Dendritic cell treated with granulocyte-macrophage colony-stimulating factor and Interleukin-4, amounts not matched to agents 40 ng/mL and 50 ng/mL, for 4 days (primary cell): ENCODE measurements at regions of chr3 and their contacts with region 1.

Region 1: DNA sequence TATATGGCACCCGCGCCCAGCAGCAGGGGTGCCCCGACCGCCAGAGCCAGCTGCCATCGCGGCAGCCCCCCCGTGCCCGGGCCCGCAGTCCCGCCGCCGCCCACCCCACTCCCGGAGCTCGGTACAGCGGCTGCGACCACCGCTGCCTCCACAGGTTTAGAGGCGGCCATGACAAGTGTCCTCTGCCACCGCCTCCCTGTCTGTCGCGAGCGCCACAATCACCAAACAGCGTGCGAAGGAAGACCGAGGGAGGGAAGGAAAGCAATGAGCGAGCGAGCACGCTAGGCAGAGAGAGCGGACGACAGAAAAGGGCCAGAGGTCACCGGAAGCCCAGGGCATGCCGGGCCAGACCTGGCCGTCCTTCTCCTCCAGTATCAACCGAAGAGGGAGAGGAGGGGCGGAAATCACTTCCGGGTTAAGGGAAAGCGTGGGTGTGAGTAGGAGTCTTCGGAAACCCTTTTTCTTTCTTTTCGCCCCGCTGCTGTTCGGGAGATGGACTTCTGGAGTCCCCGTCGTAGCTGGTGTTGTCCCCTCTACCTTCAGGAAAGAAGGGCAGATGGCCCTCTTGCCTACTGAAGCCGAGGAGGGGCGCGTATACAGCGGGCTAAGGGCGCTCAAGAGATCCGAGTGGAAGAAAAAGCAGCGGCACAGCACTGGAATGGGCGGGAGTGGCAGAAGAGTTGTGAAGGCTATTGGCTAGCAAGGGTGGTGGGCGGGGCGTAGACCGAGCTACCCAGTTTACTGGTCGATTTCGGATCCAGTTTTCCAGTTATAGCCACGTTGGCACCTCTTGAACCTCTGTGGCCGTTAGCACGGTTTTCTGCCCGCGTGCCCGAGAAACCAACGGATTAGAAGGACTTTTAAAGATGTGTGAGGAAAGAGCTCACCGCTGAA is at the starts of genes LNP1 and TOMM70:
- H3K4me3 Mint-ChIP-seq: peak within 1 kb of the TSS; percentile 96
- H3K27ac Mint-ChIP-seq: peak within 1 kb of the TSS; percentile 98
- H3K4me1 Mint-ChIP-seq: peaks cover 37% of the 10 kb centered on the region
- H3K27me3 Mint-ChIP-seq: no peaks in the 10 kb centered on the region

Region 2: DNA sequence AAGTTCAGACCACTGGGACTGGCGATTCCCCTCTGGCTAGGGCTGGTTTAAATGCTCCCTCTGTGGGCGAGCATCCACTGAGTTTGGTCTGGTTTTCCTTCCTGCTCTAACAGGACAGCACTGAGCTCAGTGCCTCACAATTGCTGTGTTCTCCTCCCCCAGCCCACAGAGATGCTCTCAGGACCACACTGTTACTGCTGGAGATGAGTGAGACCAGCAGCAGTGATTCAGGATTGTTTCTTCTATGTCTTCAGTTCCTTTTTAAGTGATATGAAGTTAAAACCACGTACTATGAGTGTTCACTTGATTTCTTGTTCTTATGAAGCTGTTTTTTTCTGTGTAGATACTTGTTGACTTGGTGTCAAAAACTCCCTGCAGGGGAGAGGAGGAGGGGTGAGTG is 943.0 kb before region 1 on chr3:
- intact Hi-C with region 1: no loop called
- H3K4me3 Mint-ChIP-seq: no peak overlapping the region
- H3K27ac Mint-ChIP-seq: no peak overlapping the region
- H3K4me1 Mint-ChIP-seq: no peaks in the 10 kb centered on the region
- H3K27me3 Mint-ChIP-seq: no peaks in the 10 kb centered on the region

Region 3: GRCh38 chr3:99817437-99818240 is 583.4 kb before region 1 on chr3 and contains the start of gene CMSS1:
- intact Hi-C with region 1: loop called (anchors 5 kb)
- H3K4me3 Mint-ChIP-seq: peak within 1 kb of the TSS; percentile 92
- H3K27ac Mint-ChIP-seq: peak within 1 kb of the TSS; percentile 96
- H3K4me1 Mint-ChIP-seq: peaks cover 10% of the 10 kb centered on the region
- H3K27me3 Mint-ChIP-seq: no peaks in the 10 kb centered on the region

Region 4: GRCh38 chr3:100260685-100261484 is 140.1 kb before region 1 on chr3 and contains the start of gene TBC1D23:
- intact Hi-C with region 1: loop called (anchors 1 kb)
- H3K4me3 Mint-ChIP-seq: peak within 1 kb of the TSS; percentile 97
- H3K27ac Mint-ChIP-seq: peak within 1 kb of the TSS; percentile 92
- H3K4me1 Mint-ChIP-seq: peaks cover 43% of the 10 kb centered on the region
- H3K27me3 Mint-ChIP-seq: no peaks in the 10 kb centered on the region

Region 5: GRCh38 chr3:100334488-100335351 is 66.3 kb before region 1 on chr3 and contains the start of gene NIT2:
- intact Hi-C with region 1: loop called (anchors 2 kb)
- H3K4me3 Mint-ChIP-seq: peak within 1 kb of the TSS; percentile 87
- H3K27ac Mint-ChIP-seq: peak within 1 kb of the TSS; percentile 88
- H3K4me1 Mint-ChIP-seq: peaks cover 25% of the 10 kb centered on the region
- H3K27me3 Mint-ChIP-seq: no peaks in the 10 kb centered on the region

Region 6: DNA sequence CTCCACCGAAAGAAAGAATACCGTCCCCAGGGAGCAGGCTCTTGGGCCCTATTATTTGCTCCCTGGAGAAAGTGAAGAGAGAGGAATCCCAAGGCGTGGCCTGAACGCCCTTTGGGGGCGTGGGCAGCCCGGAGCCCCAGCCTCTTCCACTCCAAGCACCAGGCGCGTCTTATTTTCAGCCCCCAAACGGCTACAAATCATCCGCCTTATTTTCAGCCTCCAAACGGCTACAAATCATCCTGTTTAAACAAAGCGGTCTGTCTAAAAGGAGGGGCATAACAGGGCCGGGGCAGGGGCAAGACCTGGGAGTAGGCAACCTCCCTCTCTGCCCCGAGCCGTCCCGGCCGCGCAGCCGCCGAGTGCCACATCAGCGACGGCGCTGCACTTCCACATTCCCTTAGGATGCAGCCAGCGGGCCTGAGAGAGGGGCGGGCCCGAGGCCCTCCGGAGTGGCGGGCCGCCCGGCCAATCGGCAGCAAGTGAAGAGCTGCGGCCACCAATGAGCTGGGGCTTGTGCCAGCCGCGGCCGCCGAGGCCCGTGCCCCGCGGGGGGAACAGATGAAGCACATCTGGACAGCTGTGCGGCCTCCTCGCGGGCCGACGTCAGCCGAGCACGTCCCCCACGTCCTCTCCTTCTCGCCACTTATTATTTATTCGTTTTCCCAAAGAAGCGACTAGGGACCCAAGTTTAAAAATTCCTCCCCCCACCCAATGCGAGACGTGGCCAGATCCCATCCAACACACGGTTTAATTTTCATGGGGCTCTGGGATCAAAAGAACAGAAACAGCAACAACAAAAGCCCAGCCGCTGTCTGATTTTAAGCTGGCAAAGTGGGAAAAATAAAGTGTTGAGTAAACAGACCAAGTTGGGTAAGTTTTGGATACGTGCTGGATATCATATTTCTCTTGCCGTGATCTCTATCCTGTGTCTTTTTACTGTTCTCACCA is 91.3 kb after region 1 on chr3 and contains the start of gene TMEM45A:
- intact Hi-C with region 1: loop called (anchors 1 kb)
- H3K4me3 Mint-ChIP-seq: peak within 1 kb of the TSS; percentile 76
- H3K27ac Mint-ChIP-seq: peak within 1 kb of the TSS; percentile 61
- H3K4me1 Mint-ChIP-seq: peaks cover 8% of the 10 kb centered on the region
- H3K27me3 Mint-ChIP-seq: peaks cover 20% of the 10 kb centered on the region

Region 7: GRCh38 chr3:100548053-100548452 is 147.0 kb after region 1 on chr3:
- intact Hi-C with region 1: no loop called
- H3K4me3 Mint-ChIP-seq: no peak overlapping the region
- H3K27ac Mint-ChIP-seq: no peak overlapping the region
- H3K4me1 Mint-ChIP-seq: no peaks in the 10 kb centered on the region
- H3K27me3 Mint-ChIP-seq: no peaks in the 10 kb centered on the region

Region 8: GRCh38 chr3:101512646-101513418 is 1111.8 kb after region 1 on chr3 and contains the start of gene SENP7:
- intact Hi-C with region 1: loop called (anchors 5 kb)
- H3K4me3 Mint-ChIP-seq: peak within 1 kb of the TSS; percentile 95
- H3K27ac Mint-ChIP-seq: peak within 1 kb of the TSS; percentile 91
- H3K4me1 Mint-ChIP-seq: peaks cover 19% of the 10 kb centered on the region
- H3K27me3 Mint-ChIP-seq: no peaks in the 10 kb centered on the region

Region 9: DNA sequence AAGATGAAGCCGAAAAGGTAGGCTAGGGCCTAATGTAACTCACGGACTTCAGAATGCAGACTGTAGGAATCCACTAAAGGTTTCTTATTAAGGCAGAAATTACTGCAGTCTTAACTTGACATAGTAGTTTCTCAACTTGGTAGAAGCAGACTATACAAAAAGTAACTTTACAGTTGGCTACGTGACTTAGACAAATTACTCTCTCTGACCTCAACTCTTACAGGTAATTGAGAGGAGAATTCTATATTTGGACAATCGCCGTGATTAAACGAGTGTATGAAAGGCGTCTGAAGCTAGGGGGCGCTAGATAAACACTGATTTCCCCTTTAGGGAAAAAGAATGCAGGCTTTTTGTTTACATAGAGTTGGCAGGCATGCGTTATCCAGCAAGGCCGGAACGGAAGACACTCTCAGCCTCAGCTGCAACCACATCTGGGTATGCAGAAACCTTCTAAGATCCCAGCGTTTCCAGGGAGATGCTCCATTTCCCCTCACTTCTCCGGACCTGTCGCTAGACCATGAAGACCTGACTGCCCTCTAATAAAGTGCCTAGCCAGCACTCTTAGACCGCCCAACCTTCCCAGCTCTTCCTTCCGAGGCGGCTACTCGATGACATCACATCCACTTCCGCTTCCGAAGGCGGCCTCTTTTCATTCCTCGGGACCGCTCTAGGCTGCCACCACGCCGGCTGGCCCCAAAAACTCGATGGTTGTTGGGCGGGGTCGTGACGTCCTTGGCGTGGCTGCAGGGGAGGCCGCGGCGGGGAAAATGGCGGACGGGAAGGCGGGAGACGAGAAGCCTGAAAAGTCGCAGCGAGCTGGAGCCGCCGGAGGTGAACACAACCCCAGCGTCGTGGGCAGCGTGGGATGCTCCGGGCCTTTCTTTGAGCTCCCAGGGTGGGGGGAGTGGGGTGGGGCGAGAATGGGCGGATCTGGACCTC is 1172.7 kb after region 1 on chr3 and contains the start of gene PCNP:
- intact Hi-C with region 1: loop called (anchors 5 kb)
- H3K4me3 Mint-ChIP-seq: peak within 1 kb of the TSS; percentile 82
- H3K27ac Mint-ChIP-seq: peak within 1 kb of the TSS; percentile 91
- H3K4me1 Mint-ChIP-seq: peaks cover 25% of the 10 kb centered on the region
- H3K27me3 Mint-ChIP-seq: peaks cover 7% of the 10 kb centered on the region